K562 (cell line): ENCODE measurements at regions of chr5 and their contacts with region 1.

Region 1: DNA sequence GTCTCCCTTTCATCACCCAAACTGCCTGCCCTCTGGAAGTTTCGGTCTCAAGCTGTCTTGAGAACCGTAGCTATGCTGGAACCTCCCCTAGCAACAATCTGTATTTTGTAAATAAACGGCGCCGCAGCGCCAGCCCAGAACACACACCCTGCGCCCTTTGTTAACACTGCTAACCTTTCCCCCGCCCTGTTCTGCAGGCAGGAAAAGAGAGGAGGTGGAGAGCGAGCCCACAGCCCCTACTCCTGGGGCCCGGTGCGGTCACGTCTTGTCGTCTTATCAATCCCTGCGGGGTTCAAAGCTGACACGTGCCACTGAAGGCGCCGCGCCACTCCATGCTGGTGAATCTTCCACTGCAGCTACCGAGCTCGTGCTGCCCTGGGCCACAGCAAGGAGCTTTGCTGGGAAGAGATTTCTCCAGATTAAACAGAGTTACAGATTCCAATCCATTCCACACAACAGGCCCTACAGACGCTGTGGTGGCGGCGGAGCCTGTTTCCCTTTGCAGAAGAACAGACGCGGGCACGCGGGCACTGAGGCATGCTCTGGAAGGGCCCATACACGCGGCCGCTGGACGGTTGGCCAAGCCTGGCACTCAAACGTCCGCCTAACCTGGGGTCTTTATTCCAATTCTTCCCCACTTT is 25.3 kb downstream of the ZDHHC11B start:
- DNase-seq: peak in 3 of 4 experiments; percentile 15 to 39 (median 25)
- ATAC-seq: peak; percentile 36
- H3K4me3 ChIP-seq: no peak overlapping the region
- H3K27ac ChIP-seq: no peak overlapping the region
- H3K4me1 ChIP-seq: peaks cover 0 to 39% of the 10 kb centered on the region in 2 experiments; a peak in 2 of 5 replicates
- H3K27me3 ChIP-seq: peaks cover 38 to 73% of the 10 kb centered on the region in 2 experiments; a peak in 4 of 5 replicates
- CTCF ChIP-seq: no peak; a peak in 1 of 6 replicates
- EP300 ChIP-seq: no peak
- POLR2A ChIP-seq: no peak
- RAD21 ChIP-seq: no peak

Region 2: GRCh38 chr5:849651-850301 is 90.5 kb after region 1 on chr5:
- CTCF ChIA-PET with region 1: no interaction called
- POLR2A ChIA-PET with region 1: no interaction called
- in situ Hi-C with region 1: loop called (anchors 10 kb)
- intact Hi-C with region 1: no loop called
- DNase-seq: peak in 2 of 4 experiments; percentile 49 to 52
- ATAC-seq: peak; percentile 6; the same call in 1 of the 3 replicates
- H3K4me3 ChIP-seq: no peak overlapping the region
- H3K27ac ChIP-seq: no peak overlapping the region
- H3K4me1 ChIP-seq: peaks cover 0 to 29% of the 10 kb centered on the region in 2 experiments; a peak in 2 of 5 replicates
- H3K27me3 ChIP-seq: peaks cover 26 to 57% of the 10 kb centered on the region in 2 experiments
- CTCF ChIP-seq: no peak
- EP300 ChIP-seq: no peak
- POLR2A ChIP-seq: no peak
- RAD21 ChIP-seq: no peak

Region 3: DNA sequence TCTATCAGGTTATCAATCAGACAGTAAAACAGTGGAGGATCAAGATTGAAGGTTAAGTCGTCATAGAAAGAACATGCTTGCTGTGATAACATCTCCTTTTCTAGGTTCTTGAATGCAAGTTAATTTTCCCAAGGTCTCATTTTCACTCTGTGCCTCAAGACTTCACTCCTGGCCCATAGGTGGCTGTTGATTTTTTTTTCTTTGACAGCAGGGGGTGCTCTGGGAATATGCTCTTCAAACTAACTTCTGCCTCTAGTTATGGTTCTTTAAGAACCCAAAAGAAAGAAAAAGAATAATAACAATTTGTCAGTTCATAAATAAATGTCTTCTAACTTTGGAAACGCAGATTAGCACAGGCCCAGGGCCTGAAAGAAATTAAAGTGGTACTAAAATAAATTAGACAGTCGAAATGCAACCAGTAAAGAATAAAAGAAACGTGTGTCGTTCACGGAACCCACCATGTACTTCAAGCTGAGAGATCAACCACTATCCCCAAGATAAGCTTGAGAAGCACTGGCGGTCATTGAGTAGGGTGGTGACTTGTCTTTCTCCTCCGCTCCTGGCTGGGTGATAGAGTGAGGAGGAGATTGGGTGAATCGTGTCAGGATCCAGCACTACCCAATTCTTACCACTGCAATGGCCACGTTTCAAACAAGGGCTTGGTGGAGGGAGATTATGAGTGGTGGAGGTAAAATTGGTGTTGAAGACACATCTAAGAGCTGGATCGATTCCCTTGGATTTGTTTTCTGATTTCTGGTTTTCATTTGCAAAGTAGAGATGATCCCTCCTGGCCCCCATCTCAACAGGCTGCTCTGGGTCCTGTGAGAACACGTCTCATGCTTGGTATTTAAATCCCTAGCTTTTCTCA is 1216.9 kb after region 1 on chr5:
- CTCF ChIA-PET with region 1: no interaction called
- POLR2A ChIA-PET with region 1: no interaction called
- in situ Hi-C with region 1: no loop called
- intact Hi-C with region 1: no loop called
- DNase-seq: peak in 1 of 4 experiments; percentile 18
- ATAC-seq: peak; percentile 46; the same call in 1 of the 3 replicates
- H3K4me3 ChIP-seq: no peak overlapping the region
- H3K27ac ChIP-seq: no peak overlapping the region
- H3K4me1 ChIP-seq: no peaks in the 10 kb centered on the region
- H3K27me3 ChIP-seq: peaks cover 6 to 30% of the 10 kb centered on the region in 2 experiments; a peak in 4 of 5 replicates
- CTCF ChIP-seq: peak in 2 of 3 experiments; percentile 51 to 58; a peak in 5 of 6 replicates
- EP300 ChIP-seq: no peak
- POLR2A ChIP-seq: no peak
- RAD21 ChIP-seq: peak; percentile 31 to 43; a peak in 3 of 4 replicates